CD4-positive, alpha-beta memory T cell (primary cell): ENCODE measurements at regions of chr11 and their contacts with region 1.

Region 1: DNA sequence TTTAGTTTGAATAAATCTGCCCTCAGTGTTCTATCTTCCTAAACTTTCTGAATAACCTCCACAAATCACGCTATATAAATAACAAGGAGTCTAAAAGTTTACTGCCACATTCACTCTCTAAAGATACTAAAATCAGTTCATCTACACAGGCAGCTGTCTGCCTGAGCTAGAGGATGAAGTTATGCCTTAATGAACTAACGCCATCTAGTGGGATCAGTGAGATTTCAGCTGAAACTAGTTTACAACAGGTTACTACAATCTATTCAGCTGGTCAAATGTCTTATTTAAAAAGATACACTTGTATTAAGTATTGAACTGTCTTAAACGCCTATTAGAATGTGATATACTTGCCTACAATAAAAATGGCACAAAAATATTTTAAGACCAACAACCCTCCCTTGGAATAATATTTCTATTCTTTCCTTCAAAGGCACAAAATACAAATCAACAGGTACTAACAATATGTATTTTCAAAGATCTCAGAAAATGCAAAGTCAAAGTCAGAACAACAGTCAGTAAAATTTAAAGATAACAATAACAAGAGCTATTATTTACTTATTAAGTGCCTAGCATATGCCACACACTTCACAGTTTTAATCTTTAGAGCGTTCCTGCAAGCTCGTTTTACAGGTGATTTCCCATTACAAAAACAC is 84.1 kb downstream of the LARGE2 start:
- DNase-seq: peak in 4 of 5 donors; percentile 52 to 63 (median 56)
- H3K4me3 ChIP-seq: no peak overlapping the region
- H3K4me3 Mint-ChIP-seq: no peak overlapping the region
- H3K27ac ChIP-seq: no peak overlapping the region
- H3K27ac Mint-ChIP-seq: peak overlapping the region in 3 of 7 donors; percentile 29 to 79 (median 56)
- H3K4me1 ChIP-seq: no peaks in the 10 kb centered on the region
- H3K4me1 Mint-ChIP-seq: peaks cover 0 to 4% (median 2%) of the 10 kb centered on the region in 4 donors
- H3K27me3 ChIP-seq: no peaks in the 10 kb centered on the region
- H3K27me3 Mint-ChIP-seq: no peaks in the 10 kb centered on the region

Region 2: DNA sequence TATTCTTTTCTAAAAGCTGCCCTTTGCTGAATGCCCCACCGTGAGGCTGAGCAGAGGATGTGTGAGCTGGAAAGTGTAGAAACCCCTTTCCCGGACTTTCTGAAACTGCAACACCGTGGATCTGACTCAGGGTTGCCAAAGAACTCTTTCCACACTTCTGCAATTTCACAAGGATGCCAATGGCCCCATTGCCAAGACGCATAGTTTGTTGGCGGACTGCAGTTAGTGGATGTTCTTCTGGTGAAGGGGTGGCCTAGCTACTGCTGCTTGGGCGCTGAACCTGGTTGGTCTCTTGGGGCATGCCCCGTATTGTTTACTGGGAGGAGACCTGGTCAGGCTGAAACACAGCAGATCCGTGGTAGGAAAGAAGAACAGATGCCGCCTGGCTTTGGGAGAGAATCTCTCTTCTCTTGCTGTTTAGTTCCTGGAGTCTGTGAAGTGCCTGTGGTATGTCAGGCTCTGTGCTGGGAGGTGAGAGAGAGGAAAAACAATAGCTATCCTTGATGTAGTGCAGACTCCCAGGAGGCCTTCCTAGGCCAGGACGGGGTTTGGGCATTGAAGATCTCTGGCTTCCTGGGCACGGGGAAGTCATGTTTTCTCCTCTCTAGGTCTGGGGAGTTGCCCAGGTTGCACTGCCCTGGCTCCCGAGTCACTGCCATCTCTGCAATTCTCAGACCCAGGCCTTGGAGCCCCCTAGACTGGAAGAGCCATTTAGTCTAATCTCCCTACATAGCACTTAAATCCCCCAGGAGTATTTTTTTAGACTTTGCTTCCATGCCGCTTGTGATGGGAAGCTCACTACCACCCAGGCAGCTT is 1414.2 kb before region 1 on chr11:
- CTCF ChIA-PET with region 1: no interaction called
- POLR2A ChIA-PET with region 1: no interaction called
- intact Hi-C with region 1: no loop called
- DNase-seq: no peak
- H3K4me3 ChIP-seq: no peak overlapping the region
- H3K4me3 Mint-ChIP-seq: peak overlapping the region in 3 of 8 donors; percentile 15 to 53 (median 35)
- H3K27ac ChIP-seq: peak overlapping the region; percentile 83
- H3K27ac Mint-ChIP-seq: peak overlapping the region; percentile 75 to 94 (median 89)
- H3K4me1 ChIP-seq: peaks cover 82% of the 10 kb centered on the region
- H3K4me1 Mint-ChIP-seq: peaks cover 55 to 92% (median 66%) of the 10 kb centered on the region in 4 donors
- H3K27me3 ChIP-seq: no peaks in the 10 kb centered on the region
- H3K27me3 Mint-ChIP-seq: no peaks in the 10 kb centered on the region

Region 3: DNA sequence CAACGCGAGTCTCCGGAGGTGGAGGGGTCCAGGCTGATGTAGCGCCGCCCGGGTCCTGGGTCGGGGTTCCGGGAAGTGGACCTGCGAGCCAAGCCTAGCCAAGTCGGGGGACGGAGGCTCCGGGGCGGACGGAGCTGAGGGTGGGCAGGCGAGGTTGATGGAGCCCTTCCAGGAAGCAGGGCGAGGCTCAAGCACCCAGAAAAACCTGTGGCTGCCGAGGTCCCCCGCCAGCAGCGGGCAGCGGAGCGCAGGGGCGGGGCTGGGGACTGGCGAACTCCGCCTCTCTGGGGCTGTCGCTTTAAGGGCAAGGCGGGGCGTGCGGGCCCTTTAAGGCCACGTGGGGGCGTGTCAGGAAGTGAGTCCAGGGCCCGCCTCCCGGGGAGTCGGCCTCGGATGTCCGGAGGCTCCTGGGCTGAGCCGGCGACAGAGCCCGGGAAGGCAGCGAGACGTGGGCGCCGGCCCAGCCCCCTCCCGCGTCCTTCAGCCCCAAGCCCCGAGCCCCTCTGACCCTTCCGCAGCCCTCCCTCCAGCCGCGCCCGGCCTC is 201.7 kb before region 1 on chr11 and contains the start of gene SLC35C1:
- CTCF ChIA-PET with region 1: no interaction called
- POLR2A ChIA-PET with region 1: no interaction called
- intact Hi-C with region 1: loop called (anchors 1 kb)
- DNase-seq: peak; percentile 93 to 94 (median 93)
- H3K4me3 ChIP-seq: peak within 1 kb of the TSS; percentile 90 to 95
- H3K4me3 Mint-ChIP-seq: peak within 1 kb of the TSS; percentile 90 to 96 (median 92)
- H3K27ac ChIP-seq: peak within 1 kb of the TSS; percentile 83
- H3K27ac Mint-ChIP-seq: peak within 1 kb of the TSS; percentile 83 to 94 (median 92)
- H3K4me1 ChIP-seq: peaks cover 48% of the 10 kb centered on the region
- H3K4me1 Mint-ChIP-seq: peaks cover 30 to 64% (median 38%) of the 10 kb centered on the region in 4 donors
- H3K27me3 ChIP-seq: no peaks in the 10 kb centered on the region
- H3K27me3 Mint-ChIP-seq: no peaks in the 10 kb centered on the region
- total RNA-seq, gene SLC35C1: 20.3 to 21.5 TPM

Region 4: GRCh38 chr11:45872513-45873356 is 133.8 kb before region 1 on chr11:
- CTCF ChIA-PET with region 1: interaction called, 30 read pairs
- POLR2A ChIA-PET with region 1: no interaction called
- intact Hi-C with region 1: loop called (anchors 10 kb)
- DNase-seq: peak in 3 of 5 donors; percentile 12 to 27 (median 13)
- H3K4me3 ChIP-seq: no peak overlapping the region
- H3K4me3 Mint-ChIP-seq: no peak overlapping the region
- H3K27ac ChIP-seq: no peak overlapping the region
- H3K27ac Mint-ChIP-seq: peak overlapping the region in 1 of 7 donors; percentile 57
- H3K4me1 ChIP-seq: no peaks in the 10 kb centered on the region
- H3K4me1 Mint-ChIP-seq: no peaks in the 10 kb centered on the region
- H3K27me3 ChIP-seq: no peaks in the 10 kb centered on the region
- H3K27me3 Mint-ChIP-seq: no peaks in the 10 kb centered on the region

Region 5: DNA sequence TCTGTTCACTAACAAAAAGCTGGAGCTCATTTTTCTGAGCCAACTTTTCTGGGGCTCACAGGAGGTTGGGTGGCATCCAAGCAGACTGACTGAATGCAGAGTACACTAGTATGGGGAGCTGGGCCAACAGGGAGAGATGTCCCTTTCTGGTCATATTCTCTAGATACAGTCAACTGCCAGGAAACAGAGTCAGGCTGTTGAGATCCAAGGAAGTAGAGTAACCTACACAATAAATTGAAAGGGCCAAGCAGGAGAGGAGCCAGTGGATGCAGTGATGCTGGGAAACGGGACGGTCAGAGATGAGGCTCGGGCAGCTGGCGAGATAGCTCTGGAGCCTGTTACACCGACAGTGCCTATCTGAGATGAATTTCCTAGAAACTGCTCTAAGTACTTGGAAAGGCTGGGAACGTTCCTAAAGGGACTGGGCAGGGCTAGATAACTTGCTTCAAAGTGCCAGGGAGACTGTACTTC is 13.0 kb before region 1 on chr11:
- CTCF ChIA-PET with region 1: interaction called, 29 read pairs
- POLR2A ChIA-PET with region 1: no interaction called
- intact Hi-C with region 1: no loop called
- DNase-seq: no peak
- H3K4me3 ChIP-seq: no peak overlapping the region
- H3K4me3 Mint-ChIP-seq: no peak overlapping the region
- H3K27ac ChIP-seq: no peak overlapping the region
- H3K27ac Mint-ChIP-seq: peak overlapping the region in 1 of 7 donors; percentile 53
- H3K4me1 ChIP-seq: peaks cover 4% of the 10 kb centered on the region
- H3K4me1 Mint-ChIP-seq: peaks cover 6 to 31% (median 16%) of the 10 kb centered on the region in 4 donors
- H3K27me3 ChIP-seq: no peaks in the 10 kb centered on the region
- H3K27me3 Mint-ChIP-seq: no peaks in the 10 kb centered on the region